Heart left ventricle (tissue), 16 donors: ENCODE measurements at regions of chr12 and their contacts with region 1.

Region 1: DNA sequence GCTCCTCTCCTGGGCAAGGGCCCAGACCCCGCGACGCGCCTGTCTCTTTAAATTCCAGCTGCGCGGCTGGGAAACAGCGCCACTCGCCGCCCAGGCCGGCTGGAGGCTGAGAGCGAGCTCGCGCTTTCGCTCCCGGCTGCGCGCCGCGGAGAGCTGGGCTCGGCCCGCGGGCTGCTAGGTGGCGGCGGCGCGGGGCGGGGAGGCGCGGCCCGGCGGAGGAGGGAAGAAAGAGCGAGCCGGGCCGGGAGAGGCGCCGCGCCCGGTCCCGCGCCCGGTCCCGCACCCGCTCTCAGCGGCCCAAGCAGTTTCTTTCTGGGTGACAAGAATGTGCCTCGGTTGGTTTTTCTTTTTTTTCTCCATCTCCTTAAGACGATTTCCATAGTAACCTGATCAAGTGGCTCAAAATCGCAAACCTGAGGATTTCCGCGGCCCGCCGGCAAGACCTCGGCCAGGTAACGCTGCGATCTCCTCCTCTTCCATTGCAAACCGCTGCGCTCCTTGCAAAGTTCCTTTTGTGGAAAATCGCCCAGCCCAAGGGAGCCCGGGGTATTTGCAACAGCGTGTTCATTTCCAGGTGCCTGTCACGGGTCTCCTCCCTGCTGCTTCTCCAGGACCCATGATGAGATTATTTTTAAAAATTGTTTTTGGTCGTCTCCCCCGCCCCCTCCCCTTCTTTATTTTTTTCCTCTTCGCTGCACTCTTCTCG is 259.5 kb upstream of the E2F7 start:
- DNase-seq: peak; percentile 70 to 86 (median 78)
- ATAC-seq: peak; percentile 85 to 100 (median 96)
- H3K4me3 ChIP-seq: peak overlapping the region; percentile 25 to 93 (median 72)
- H3K27ac ChIP-seq: peak overlapping the region in 5 of 12 donors; percentile 20 to 63 (median 49)
- H3K4me1 ChIP-seq: peaks cover 0 to 14% (median 5%) of the 10 kb centered on the region in 12 donors
- H3K27me3 ChIP-seq: peaks cover 0 to 17% (median 0%) of the 10 kb centered on the region in 9 donors
- CTCF ChIP-seq: peak in 11 of 12 donors; percentile 9 to 77 (median 48)
- POLR2A ChIP-seq: no peak

Region 2: GRCh38 chr12:77065361-77066204 is 259.3 kb before region 1 on chr12 and contains the start of gene E2F7:
- intact Hi-C with region 1: loop called in 2 of 10 experiments (anchors 10 kb)
- DNase-seq: peak; percentile 87 to 93 (median 88)
- ATAC-seq: peak; percentile 94 to 100 (median 96)
- H3K4me3 ChIP-seq: peak within 1 kb of the TSS; percentile 27 to 89 (median 76)
- H3K27ac ChIP-seq: peak within 1 kb of the TSS in 4 of 12 donors; percentile 20 to 54 (median 38)
- H3K4me1 ChIP-seq: peaks cover 0 to 32% (median 9%) of the 10 kb centered on the region in 12 donors
- H3K27me3 ChIP-seq: peaks cover 0 to 24% (median 0%) of the 10 kb centered on the region in 9 donors
- CTCF ChIP-seq: peak in 1 of 12 donors; percentile 9
- POLR2A ChIP-seq: peak in 1 of 2 donors; percentile 19
- total RNA-seq, gene E2F7: 0.04 to 1.5 (median 0.14) TPM in 7 of 9 donors, not detected in the others

Region 3: GRCh38 chr12:77152623-77153193 is 172.2 kb before region 1 on chr12:
- intact Hi-C with region 1: loop called in 6 of 10 experiments (anchors 5 to 10 kb)
- DNase-seq: no peak
- ATAC-seq: no peak
- H3K4me3 ChIP-seq: no peak overlapping the region
- H3K27ac ChIP-seq: no peak overlapping the region
- H3K4me1 ChIP-seq: no peaks in the 10 kb centered on the region
- H3K27me3 ChIP-seq: no peaks in the 10 kb centered on the region
- CTCF ChIP-seq: peak; percentile 15 to 68 (median 56)
- POLR2A ChIP-seq: no peak

Region 4: GRCh38 chr12:77433799-77434198 is 108.9 kb after region 1 on chr12:
- intact Hi-C with region 1: loop called in 1 of 10 experiments (anchors 10 kb)
- DNase-seq: no peak
- ATAC-seq: no peak
- H3K4me3 ChIP-seq: no peak overlapping the region
- H3K27ac ChIP-seq: no peak overlapping the region
- H3K4me1 ChIP-seq: peaks cover 0 to 6% (median 0%) of the 10 kb centered on the region in 12 donors
- H3K27me3 ChIP-seq: no peaks in the 10 kb centered on the region
- CTCF ChIP-seq: no peak
- POLR2A ChIP-seq: no peak

Region 5: GRCh38 chr12:77679686-77680085 is 354.8 kb after region 1 on chr12:
- intact Hi-C with region 1: loop called in 2 of 10 experiments (anchors 5 to 10 kb)
- DNase-seq: no peak
- ATAC-seq: no peak
- H3K4me3 ChIP-seq: no peak overlapping the region
- H3K27ac ChIP-seq: no peak overlapping the region
- H3K4me1 ChIP-seq: peaks cover 0 to 2% (median 0%) of the 10 kb centered on the region in 12 donors
- H3K27me3 ChIP-seq: no peaks in the 10 kb centered on the region
- CTCF ChIP-seq: no peak
- POLR2A ChIP-seq: no peak

Region 6: DNA sequence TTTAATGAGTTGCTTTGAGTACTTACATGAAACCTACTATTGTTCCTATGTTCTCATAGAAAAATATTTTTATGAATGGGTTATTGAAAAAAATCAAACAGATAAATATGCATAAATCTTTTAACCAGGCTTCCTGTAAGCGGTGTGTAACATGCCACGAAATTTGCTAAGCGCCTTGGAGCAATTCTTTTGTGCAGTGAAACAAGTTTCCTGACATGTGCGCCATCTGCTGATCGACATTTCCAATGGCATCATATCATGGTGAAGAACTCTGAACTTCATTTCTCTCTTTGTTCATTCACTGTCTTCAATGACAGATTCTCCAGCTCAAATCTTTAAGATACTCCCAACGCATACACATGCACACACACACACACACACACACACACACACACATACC is 360.2 kb after region 1 on chr12:
- intact Hi-C with region 1: loop called in 3 of 10 experiments (anchors 5 to 10 kb)
- DNase-seq: peak; percentile 33 to 55 (median 50)
- ATAC-seq: peak; percentile 58 to 82 (median 72)
- H3K4me3 ChIP-seq: peak overlapping the region in 6 of 12 donors; percentile 1 to 22 (median 11)
- H3K27ac ChIP-seq: no peak overlapping the region
- H3K4me1 ChIP-seq: peaks cover 0 to 6% (median 0%) of the 10 kb centered on the region in 12 donors
- H3K27me3 ChIP-seq: no peaks in the 10 kb centered on the region
- CTCF ChIP-seq: peak in 11 of 12 donors; percentile 33 to 70 (median 54)
- POLR2A ChIP-seq: no peak